Activated CD4-positive, alpha-beta T cell treated with anti-CD3 and anti-CD28 coated beads for 36 hours (primary cell): ENCODE measurements at regions of chr11 and their contacts with region 1.

Region 1: DNA sequence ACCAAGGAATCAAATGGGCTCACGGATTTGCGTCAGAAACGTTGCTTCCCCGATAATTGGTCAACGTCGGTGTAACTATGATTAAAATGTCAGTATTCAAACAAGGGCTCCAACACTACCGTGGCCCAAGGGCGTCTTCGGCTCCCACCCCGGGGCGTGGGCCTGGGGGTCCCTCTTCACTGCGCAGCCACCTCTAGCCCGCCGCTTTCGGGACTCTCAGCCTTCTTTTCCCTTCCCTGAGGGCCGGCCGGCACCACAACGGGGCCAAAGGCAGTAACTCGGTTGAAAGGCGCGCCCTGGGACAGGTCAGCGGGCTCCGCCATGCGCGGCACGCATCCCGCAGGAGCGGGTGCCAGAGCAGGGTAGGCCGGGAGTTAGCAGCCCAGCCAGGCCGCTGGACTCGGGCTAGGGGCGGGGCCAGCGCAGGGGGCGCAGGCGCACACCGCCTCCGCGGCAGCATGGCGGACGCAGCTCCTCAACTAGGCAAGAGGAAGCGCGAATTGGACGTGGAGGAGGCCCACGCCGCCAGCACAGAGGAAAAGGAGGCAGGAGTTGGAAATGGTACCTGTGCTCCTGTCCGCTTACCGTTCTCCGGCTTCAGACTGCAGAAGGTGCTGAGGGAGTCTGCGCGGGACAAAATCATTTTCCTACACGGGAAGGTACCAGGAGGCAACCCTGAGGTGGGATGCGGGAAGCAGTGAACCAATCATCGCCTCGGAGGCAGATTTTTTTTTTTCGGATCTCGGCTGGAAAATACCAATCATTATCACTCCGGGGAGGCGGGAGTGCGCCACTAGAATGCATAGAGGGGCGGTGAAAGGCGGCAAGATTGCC is at the start of gene DCPS:
- DNase-seq: peak; percentile 92
- ATAC-seq: peak; percentile 93
- H3K4me3 Mint-ChIP-seq: peak within 1 kb of the TSS; percentile 85
- H3K27ac Mint-ChIP-seq: peak within 1 kb of the TSS; percentile 98
- H3K4me1 Mint-ChIP-seq: peaks cover 32% of the 10 kb centered on the region
- H3K27me3 Mint-ChIP-seq: no peaks in the 10 kb centered on the region
- total RNA-seq, gene DCPS: 29.7 to 39.3 TPM

Region 2: DNA sequence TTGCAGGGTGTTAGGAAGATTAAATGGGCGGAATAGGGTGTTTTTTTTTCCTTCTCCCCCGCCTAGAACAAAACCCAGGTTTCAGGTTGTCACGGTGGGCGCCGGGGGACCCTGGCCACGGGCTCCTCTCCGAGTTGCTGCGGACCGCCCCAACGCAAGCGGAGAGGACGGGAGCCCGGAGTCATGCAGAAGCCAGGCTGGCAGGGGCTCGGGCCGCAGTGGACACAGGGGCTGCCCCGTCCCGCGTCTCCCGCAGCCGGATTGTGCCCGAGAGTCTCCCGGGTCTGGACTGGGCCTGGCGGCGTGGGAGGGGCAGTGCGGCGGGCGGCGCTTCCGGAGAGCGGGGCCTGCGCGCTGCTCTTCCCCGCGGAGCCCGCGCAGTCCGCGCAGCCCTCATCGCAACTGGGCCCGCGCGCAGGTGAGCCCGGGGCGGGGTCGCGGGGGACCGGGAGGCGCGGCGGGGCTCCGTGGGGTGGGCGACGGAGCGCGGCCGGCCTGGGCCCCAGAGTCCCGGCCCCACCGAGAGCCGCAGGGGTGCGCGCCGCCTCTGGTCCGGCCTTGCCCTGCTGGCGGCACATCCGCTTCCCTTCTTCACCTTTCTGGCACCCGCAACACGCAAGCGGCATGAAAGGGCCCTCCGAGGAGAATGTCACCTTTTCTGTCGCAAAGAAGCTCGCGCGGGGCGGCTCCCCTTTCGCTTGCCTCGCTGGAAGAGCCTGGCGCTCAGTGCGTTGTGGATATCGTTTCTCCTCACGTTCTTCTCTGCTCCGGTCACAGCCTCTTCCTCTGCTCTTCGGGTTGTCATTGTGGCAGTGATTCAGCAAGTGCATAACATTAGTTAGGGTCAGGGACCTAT is 20.9 kb before region 1 on chr11 and contains the start of gene TIRAP:
- CTCF ChIA-PET with region 1: interaction called, 4 read pairs
- POLR2A ChIA-PET with region 1: interaction called, 3 read pairs
- intact Hi-C with region 1: loop called (anchors 1 kb)
- DNase-seq: peak; percentile 76
- ATAC-seq: peak; percentile 53
- H3K4me3 Mint-ChIP-seq: peak within 1 kb of the TSS; percentile 81
- H3K27ac Mint-ChIP-seq: peak within 1 kb of the TSS; percentile 94
- H3K4me1 Mint-ChIP-seq: peaks cover 46% of the 10 kb centered on the region
- H3K27me3 Mint-ChIP-seq: no peaks in the 10 kb centered on the region
- total RNA-seq, gene TIRAP: 5.3 to 7.5 TPM

Region 3: GRCh38 chr11:126332131-126332711 is 28.4 kb after region 1 on chr11:
- CTCF ChIA-PET with region 1: interaction called, 4 read pairs
- POLR2A ChIA-PET with region 1: no interaction called
- intact Hi-C with region 1: loop called in 1 of 2 experiments (anchors 1 kb)
- DNase-seq: peak; percentile 57
- ATAC-seq: peak; percentile 92
- H3K4me3 Mint-ChIP-seq: no peak overlapping the region
- H3K27ac Mint-ChIP-seq: no peak overlapping the region
- H3K4me1 Mint-ChIP-seq: peaks cover 13% of the 10 kb centered on the region
- H3K27me3 Mint-ChIP-seq: no peaks in the 10 kb centered on the region

Region 4: GRCh38 chr11:126355324-126355925 is 51.6 kb after region 1 on chr11 and contains the start of gene ST3GAL4:
- CTCF ChIA-PET with region 1: interaction called, 3 read pairs
- POLR2A ChIA-PET with region 1: no interaction called
- intact Hi-C with region 1: loop called in 1 of 2 experiments (anchors 1 kb)
- DNase-seq: peak; percentile 86
- ATAC-seq: peak; percentile 77
- H3K4me3 Mint-ChIP-seq: peak within 1 kb of the TSS; percentile 93
- H3K27ac Mint-ChIP-seq: peak within 1 kb of the TSS; percentile 88
- H3K4me1 Mint-ChIP-seq: peaks cover 29% of the 10 kb centered on the region
- H3K27me3 Mint-ChIP-seq: no peaks in the 10 kb centered on the region
- total RNA-seq, gene ST3GAL4: 7.5 to 9.1 TPM

Region 5: DNA sequence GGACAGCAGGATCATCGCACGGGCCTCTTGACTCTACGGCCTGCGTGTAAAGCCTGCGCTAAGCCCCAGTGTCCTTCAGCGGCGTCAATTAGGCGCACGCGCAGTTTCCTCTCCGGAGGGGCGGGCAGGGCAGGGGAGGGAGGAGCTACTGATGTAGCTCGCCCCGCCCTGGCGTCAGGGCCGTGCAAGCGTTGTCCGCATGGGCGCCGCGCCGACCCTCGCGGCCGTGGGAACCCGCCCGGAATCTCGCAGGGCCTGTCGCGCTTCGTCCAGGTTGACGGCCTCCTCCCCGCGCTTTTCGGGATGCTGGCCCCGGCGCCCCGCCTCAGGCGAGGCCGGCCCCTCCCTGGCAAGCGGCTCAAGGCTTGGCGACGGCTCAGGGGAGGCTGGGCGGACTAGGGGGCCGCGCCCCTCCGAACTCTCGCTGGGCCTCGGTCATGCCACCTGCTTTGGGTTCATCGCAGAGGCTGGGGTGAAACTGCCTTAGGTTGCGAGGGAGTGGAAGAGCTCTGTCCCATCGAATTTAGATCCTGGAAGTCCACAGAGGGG is 112.8 kb after region 1 on chr11:
- CTCF ChIA-PET with region 1: interaction called, 3 read pairs
- POLR2A ChIA-PET with region 1: no interaction called
- intact Hi-C with region 1: loop called in 1 of 2 experiments (anchors 1 kb)
- DNase-seq: peak; percentile 88
- ATAC-seq: peak; percentile 100
- H3K4me3 Mint-ChIP-seq: peak overlapping the region; percentile 36
- H3K27ac Mint-ChIP-seq: peak overlapping the region; percentile 19
- H3K4me1 Mint-ChIP-seq: peaks cover 7% of the 10 kb centered on the region
- H3K27me3 Mint-ChIP-seq: no peaks in the 10 kb centered on the region

Region 6: GRCh38 chr11:127345819-127346459 is 1042.1 kb after region 1 on chr11:
- CTCF ChIA-PET with region 1: no interaction called
- POLR2A ChIA-PET with region 1: no interaction called
- intact Hi-C with region 1: loop called in 1 of 2 experiments (anchors 10 kb)
- DNase-seq: peak; percentile 38
- ATAC-seq: no peak
- H3K4me3 Mint-ChIP-seq: no peak overlapping the region
- H3K27ac Mint-ChIP-seq: no peak overlapping the region
- H3K4me1 Mint-ChIP-seq: no peaks in the 10 kb centered on the region
- H3K27me3 Mint-ChIP-seq: peaks cover 9% of the 10 kb centered on the region